OCI-LY7 (cell line): ENCODE measurements at regions of chr19 and their contacts with region 1.

Region 1: DNA sequence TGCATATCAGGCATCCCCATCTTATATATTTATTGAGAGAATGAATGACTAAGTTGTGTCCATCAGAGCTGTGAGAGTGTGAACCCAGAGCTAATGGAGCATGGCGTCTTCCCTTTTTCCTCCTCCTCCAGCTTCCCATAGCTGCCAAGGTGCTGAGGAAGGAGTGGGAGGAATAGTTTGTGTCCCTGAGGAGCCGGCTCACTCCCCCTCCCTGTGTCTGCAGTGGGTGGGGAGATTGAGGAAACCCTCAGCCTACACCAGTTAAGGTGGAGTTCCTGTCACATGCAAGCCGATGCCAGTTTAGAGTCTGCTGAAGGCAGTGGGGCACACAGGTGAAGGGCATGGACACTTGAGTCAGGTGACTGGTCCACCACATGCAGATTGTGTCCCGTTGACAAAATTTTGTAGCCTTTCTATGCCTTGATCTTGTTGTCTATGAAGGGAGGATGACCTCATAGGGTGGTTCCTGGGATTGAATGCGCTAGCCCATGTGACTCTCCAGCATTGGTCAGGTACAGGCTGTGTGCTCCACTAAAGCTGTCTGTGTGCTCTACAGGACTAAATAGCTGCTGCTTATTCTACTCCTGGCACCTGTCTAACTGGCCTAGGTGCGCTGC is 47.6 kb upstream of the GPI start:
- DNase-seq: peak; percentile 20
- H3K4me3 ChIP-seq: no peak overlapping the region
- H3K27ac ChIP-seq: peak overlapping the region; percentile 14
- H3K4me1 ChIP-seq: peaks cover 55% of the 10 kb centered on the region
- CTCF ChIP-seq: no peak

Region 2: GRCh38 chr19:34269968-34270621 is 47.3 kb before region 1 on chr19:
- CTCF ChIA-PET with region 1: interaction called, 3 read pairs
- POLR2A ChIA-PET with region 1: interaction called, 16 read pairs
- intact Hi-C with region 1: no loop called
- DNase-seq: peak; percentile 89
- H3K4me3 ChIP-seq: peak overlapping the region; percentile 57
- H3K27ac ChIP-seq: peak overlapping the region; percentile 94
- H3K4me1 ChIP-seq: peaks cover 81% of the 10 kb centered on the region
- CTCF ChIP-seq: no peak